CD8-positive, alpha-beta T cell (primary cell): ENCODE measurements at regions of chr1 and their contacts with region 1.

Region 1: GRCh38 chr1:160006312-160006940 is 25.4 kb downstream of the PIGM start:
- DNase-seq: peak; percentile 47 to 83 (median 75)
- ATAC-seq: peak; percentile 95
- H3K4me3 ChIP-seq: no peak overlapping the region
- H3K4me3 Mint-ChIP-seq: no peak overlapping the region
- H3K27ac ChIP-seq: no peak overlapping the region
- H3K27ac Mint-ChIP-seq: no peak overlapping the region
- H3K4me1 ChIP-seq: no peaks in the 10 kb centered on the region
- H3K4me1 Mint-ChIP-seq: no peaks in the 10 kb centered on the region
- H3K27me3 ChIP-seq: no peaks in the 10 kb centered on the region
- H3K27me3 Mint-ChIP-seq: peaks cover 2% of the 10 kb centered on the region
- CTCF ChIP-seq: peak; percentile 90

Region 2: DNA sequence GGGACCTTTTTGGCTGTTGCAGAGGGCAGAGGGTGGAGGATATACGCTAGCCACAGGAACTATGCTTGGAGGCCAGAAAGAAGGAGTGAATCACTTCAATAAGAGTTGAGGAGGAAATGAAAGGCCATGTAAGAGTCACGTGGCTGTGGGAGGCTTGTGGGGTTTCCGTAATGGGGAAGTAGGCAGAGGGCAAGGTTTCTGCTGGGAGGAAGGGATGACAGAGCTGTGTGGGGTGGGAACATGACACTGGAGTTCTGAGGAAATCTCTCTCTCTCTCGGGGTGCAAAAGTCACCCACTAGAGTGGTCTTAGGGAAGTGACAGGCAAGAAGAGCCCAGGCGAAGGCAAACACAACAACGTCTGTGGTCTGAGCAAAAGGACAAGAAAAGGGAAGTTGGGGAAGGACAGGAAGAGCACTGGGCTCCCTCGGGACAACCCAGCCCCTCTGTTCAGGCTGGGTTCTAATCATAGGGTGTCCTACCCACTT is 1720.6 kb before region 1 on chr1:
- CTCF ChIA-PET with region 1: no interaction called
- POLR2A ChIA-PET with region 1: no interaction called
- intact Hi-C with region 1: no loop called
- DNase-seq: peak in 3 of 9 experiments; percentile 7 to 51 (median 11)
- ATAC-seq: no peak
- H3K4me3 ChIP-seq: no peak overlapping the region
- H3K4me3 Mint-ChIP-seq: no peak overlapping the region
- H3K27ac ChIP-seq: no peak overlapping the region
- H3K27ac Mint-ChIP-seq: no peak overlapping the region
- H3K4me1 ChIP-seq: no peaks in the 10 kb centered on the region
- H3K4me1 Mint-ChIP-seq: peaks cover 12% of the 10 kb centered on the region
- H3K27me3 ChIP-seq: peaks cover 2 to 4% of the 10 kb centered on the region in 2 experiments
- H3K27me3 Mint-ChIP-seq: peaks cover 23% of the 10 kb centered on the region
- CTCF ChIP-seq: no peak

Region 3: DNA sequence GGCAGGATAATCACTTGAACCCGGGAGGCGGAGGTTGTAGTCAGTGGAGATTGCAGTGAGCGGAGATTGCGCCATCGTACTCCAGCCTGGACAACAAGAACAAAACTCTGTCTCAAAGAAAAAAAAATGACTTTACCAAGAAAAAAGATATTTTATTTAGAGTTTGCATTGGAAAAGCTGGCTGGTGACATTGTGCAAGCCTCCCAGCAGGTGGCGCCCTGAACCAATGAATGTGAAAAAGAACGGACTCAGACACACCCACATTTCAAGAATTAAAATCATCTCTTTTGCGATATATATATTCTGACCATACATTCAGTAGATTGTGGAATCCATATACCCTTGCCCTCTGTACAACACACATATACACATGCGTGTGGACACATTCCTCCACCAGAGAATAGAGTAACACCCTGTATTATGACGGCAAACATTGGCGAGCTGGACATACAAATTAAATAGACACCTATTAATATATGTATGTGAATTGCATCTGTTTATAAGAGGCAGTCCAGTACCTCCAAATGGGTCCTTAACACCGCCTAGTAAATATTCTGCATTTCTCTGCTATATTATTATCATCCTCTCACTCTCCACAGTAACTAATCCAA is 874.0 kb before region 1 on chr1:
- CTCF ChIA-PET with region 1: interaction called, 19 read pairs
- POLR2A ChIA-PET with region 1: no interaction called
- intact Hi-C with region 1: no loop called
- DNase-seq: peak; percentile 25 to 72 (median 66)
- ATAC-seq: no peak
- H3K4me3 ChIP-seq: no peak overlapping the region
- H3K4me3 Mint-ChIP-seq: no peak overlapping the region
- H3K27ac ChIP-seq: no peak overlapping the region
- H3K27ac Mint-ChIP-seq: no peak overlapping the region
- H3K4me1 ChIP-seq: no peaks in the 10 kb centered on the region
- H3K4me1 Mint-ChIP-seq: no peaks in the 10 kb centered on the region
- H3K27me3 ChIP-seq: peaks cover 0 to 3% of the 10 kb centered on the region in 2 experiments
- H3K27me3 Mint-ChIP-seq: peaks cover 5% of the 10 kb centered on the region
- CTCF ChIP-seq: peak; percentile 89

Region 4: GRCh38 chr1:159780583-159781582 is 225.5 kb before region 1 on chr1 and contains the start of gene DUSP23:
- CTCF ChIA-PET with region 1: interaction called, 5 read pairs
- POLR2A ChIA-PET with region 1: no interaction called
- intact Hi-C with region 1: loop called (anchors 1 to 5 kb)
- DNase-seq: peak; percentile 90 to 98 (median 95)
- ATAC-seq: peak; percentile 96
- H3K4me3 ChIP-seq: peak within 1 kb of the TSS; percentile 59 to 69
- H3K4me3 Mint-ChIP-seq: peak within 1 kb of the TSS; percentile 89
- H3K27ac ChIP-seq: peak within 1 kb of the TSS; percentile 16 to 62
- H3K27ac Mint-ChIP-seq: peak within 1 kb of the TSS; percentile 89
- H3K4me1 ChIP-seq: peaks cover 10% of the 10 kb centered on the region
- H3K4me1 Mint-ChIP-seq: peaks cover 28% of the 10 kb centered on the region
- H3K27me3 ChIP-seq: no peaks in the 10 kb centered on the region
- H3K27me3 Mint-ChIP-seq: no peaks in the 10 kb centered on the region
- CTCF ChIP-seq: peak; percentile 78
- total RNA-seq, gene DUSP23: 3.8 to 6.3 TPM

Region 5: DNA sequence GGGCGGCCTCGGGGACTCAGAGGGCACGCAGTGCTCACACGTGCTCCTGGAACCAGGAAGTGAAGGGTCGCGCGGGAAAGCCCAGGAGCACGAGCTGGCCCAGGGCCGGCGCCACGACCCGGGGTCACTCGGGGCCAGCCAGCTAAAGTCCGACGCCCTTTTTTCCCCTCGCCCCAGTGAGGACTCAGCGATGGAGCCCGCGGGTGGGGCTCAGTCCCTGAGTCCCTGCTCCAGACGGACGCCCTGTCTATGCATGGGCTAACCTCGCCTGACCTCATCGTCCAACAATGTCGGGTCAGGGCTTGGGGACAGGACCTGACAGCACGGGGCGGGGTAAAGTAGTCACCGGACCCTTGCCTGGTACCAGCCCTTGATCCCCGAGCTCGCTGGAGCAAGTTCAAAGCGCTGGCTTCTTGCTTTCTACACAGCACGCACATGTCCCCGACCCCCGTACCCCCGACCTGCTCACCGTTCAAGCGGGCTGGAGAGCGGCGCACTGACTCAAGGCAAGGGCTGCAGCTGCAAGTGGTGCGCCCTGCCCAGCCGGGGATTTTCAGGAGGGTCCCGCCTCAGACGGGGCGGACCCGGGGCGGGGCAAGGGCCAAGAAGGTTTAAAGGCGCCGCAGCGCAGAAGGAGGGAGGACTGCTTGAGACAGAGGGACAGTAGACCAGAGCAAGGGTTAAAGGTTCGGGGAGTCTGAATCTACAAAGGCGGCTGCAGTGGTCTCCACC is 81.3 kb before region 1 on chr1 and contains the start of gene TAGLN2:
- CTCF ChIA-PET with region 1: interaction called, 24 read pairs
- POLR2A ChIA-PET with region 1: no interaction called
- intact Hi-C with region 1: no loop called
- DNase-seq: peak; percentile 82 to 94 (median 91)
- ATAC-seq: peak; percentile 55
- H3K4me3 ChIP-seq: peak within 1 kb of the TSS; percentile 83 to 96
- H3K4me3 Mint-ChIP-seq: peak within 1 kb of the TSS; percentile 95
- H3K27ac ChIP-seq: peak within 1 kb of the TSS; percentile 94 to 98
- H3K27ac Mint-ChIP-seq: peak within 1 kb of the TSS; percentile 98
- H3K4me1 ChIP-seq: peaks cover 40% of the 10 kb centered on the region
- H3K4me1 Mint-ChIP-seq: peaks cover 53% of the 10 kb centered on the region
- H3K27me3 ChIP-seq: no peaks in the 10 kb centered on the region
- H3K27me3 Mint-ChIP-seq: no peaks in the 10 kb centered on the region
- CTCF ChIP-seq: no peak
- total RNA-seq, gene TAGLN2: 235 to 238 TPM

Region 6: DNA sequence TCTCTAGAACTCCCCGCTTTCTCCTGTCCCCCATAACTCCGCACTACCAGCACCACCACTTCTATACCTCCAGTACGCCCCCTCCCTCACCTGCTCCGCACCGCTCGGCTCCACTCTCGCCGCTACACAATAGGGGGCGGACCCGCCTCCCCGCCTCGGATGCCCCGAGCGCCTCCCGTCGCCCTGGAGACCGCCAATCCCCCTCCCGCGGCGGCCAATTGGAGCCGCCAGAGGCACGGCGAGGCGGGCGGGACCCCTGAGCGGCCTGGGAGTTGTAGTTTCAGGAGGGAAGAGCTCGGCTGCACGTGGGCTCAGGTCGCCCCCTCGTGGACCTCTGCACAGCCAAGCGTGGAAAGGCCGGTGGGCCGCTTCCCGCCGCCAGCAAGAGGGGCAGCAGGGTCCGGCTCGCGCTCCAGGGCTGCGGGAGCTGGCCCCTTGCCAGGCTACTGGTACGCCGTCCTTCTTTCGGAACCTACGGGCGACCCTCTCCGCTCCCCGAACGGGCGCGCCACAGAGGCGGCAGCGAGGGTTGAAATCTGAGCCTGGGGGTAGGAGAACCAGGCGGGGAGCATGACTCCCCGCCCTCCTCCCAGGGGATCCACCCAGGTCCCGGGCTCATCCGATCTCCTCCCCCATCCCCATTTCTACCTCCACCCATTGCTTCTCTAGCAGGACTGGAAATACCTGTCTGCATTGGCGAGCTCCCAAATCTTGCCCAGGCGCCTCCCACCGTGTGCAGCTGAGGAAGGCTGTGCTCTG is 60.8 kb before region 1 on chr1 and contains the start of gene IGSF9:
- CTCF ChIA-PET with region 1: interaction called, 40 read pairs
- POLR2A ChIA-PET with region 1: no interaction called
- intact Hi-C with region 1: no loop called
- DNase-seq: peak; percentile 67 to 92 (median 86)
- ATAC-seq: peak; percentile 97
- H3K4me3 ChIP-seq: peak within 1 kb of the TSS; percentile 13 to 32
- H3K4me3 Mint-ChIP-seq: peak within 1 kb of the TSS; percentile 68
- H3K27ac ChIP-seq: no peak within 1 kb of the TSS
- H3K27ac Mint-ChIP-seq: no peak within 1 kb of the TSS
- H3K4me1 ChIP-seq: peaks cover 12% of the 10 kb centered on the region
- H3K4me1 Mint-ChIP-seq: peaks cover 13% of the 10 kb centered on the region
- H3K27me3 ChIP-seq: peaks cover 5 to 16% of the 10 kb centered on the region in 2 experiments
- H3K27me3 Mint-ChIP-seq: peaks cover 26% of the 10 kb centered on the region
- CTCF ChIP-seq: peak; percentile 67
- total RNA-seq, gene IGSF9: not detected

Region 7: DNA sequence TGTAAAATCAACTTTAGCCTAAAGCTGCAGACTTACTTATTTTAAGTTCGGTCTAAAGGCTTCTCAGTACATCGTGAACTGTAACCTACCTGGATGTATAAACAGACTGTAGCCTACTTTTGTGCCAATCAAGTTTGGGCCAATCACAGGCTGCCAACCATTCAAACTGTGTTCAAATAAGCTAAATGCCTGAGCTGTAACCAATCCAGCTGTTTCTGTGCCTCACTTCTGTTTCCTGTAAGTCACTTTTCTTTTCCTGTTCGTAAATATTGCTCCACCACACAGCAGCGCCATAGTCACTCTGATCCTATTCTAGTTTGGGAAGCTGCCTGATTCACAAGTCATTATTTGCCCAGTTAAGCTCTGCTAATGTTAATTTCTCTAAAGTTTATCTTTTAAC is 14.9 kb before region 1 on chr1:
- CTCF ChIA-PET with region 1: interaction called, 20 read pairs
- POLR2A ChIA-PET with region 1: no interaction called
- intact Hi-C with region 1: no loop called
- DNase-seq: peak in 2 of 9 experiments; percentile 17 to 19
- ATAC-seq: peak; percentile 52
- H3K4me3 ChIP-seq: no peak overlapping the region
- H3K4me3 Mint-ChIP-seq: no peak overlapping the region
- H3K27ac ChIP-seq: no peak overlapping the region
- H3K27ac Mint-ChIP-seq: no peak overlapping the region
- H3K4me1 ChIP-seq: no peaks in the 10 kb centered on the region
- H3K4me1 Mint-ChIP-seq: peaks cover 6% of the 10 kb centered on the region
- H3K27me3 ChIP-seq: no peaks in the 10 kb centered on the region
- H3K27me3 Mint-ChIP-seq: peaks cover 22% of the 10 kb centered on the region
- CTCF ChIP-seq: no peak

Region 8: GRCh38 chr1:160031365-160032164 is 25.1 kb after region 1 on chr1 and contains the start of gene PIGM:
- CTCF ChIA-PET with region 1: interaction called, 22 read pairs
- POLR2A ChIA-PET with region 1: no interaction called
- intact Hi-C with region 1: no loop called
- DNase-seq: peak; percentile 78 to 96 (median 94)
- ATAC-seq: peak; percentile 98
- H3K4me3 ChIP-seq: peak within 1 kb of the TSS; percentile 68 to 90
- H3K4me3 Mint-ChIP-seq: peak within 1 kb of the TSS; percentile 98
- H3K27ac ChIP-seq: peak within 1 kb of the TSS; percentile 58
- H3K27ac Mint-ChIP-seq: peak within 1 kb of the TSS; percentile 93
- H3K4me1 ChIP-seq: peaks cover 23% of the 10 kb centered on the region
- H3K4me1 Mint-ChIP-seq: peaks cover 40% of the 10 kb centered on the region
- H3K27me3 ChIP-seq: no peaks in the 10 kb centered on the region
- H3K27me3 Mint-ChIP-seq: no peaks in the 10 kb centered on the region
- CTCF ChIP-seq: no peak
- total RNA-seq, gene PIGM: 1.4 to 1.6 TPM

Region 9: DNA sequence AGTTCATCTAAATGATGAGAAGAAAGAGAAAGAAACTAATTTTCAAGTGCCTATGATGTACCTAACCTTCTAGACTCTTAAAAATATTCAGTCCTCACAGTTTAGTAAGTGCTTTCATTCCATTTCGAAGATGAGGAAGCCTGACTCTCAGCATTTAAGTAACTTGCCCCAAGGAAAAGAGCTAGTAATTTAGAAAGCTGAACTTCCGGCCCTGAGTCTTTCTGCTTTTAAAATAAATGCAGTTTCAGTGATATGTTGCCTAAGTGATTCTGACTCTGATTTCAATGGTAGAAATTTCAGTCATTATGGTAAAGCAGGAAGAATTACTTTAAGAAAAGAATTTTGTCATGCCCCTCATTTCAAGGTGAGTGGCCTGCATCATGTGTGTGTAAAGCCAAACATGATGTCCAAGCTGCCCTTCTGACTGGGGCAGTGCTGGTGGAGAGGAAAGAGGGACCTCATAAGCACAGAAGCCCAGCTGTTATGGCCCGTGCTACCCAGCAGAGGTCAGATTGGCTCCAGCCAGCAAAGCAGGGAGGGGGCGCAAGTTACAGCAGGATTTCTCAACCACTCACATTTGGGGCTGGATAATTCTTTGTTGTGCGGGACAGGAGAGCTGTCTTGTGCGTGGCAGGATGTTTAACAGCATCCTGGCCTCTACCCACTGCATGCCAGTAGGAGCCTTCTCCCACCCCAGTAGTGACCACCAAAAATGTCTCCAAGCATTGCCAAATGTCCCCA is 155.7 kb after region 1 on chr1:
- CTCF ChIA-PET with region 1: no interaction called
- POLR2A ChIA-PET with region 1: no interaction called
- intact Hi-C with region 1: no loop called
- DNase-seq: no peak
- ATAC-seq: no peak
- H3K4me3 ChIP-seq: no peak overlapping the region
- H3K4me3 Mint-ChIP-seq: no peak overlapping the region
- H3K27ac ChIP-seq: no peak overlapping the region
- H3K27ac Mint-ChIP-seq: no peak overlapping the region
- H3K4me1 ChIP-seq: no peaks in the 10 kb centered on the region
- H3K4me1 Mint-ChIP-seq: no peaks in the 10 kb centered on the region
- H3K27me3 ChIP-seq: peaks cover 0 to 2% of the 10 kb centered on the region in 2 experiments
- H3K27me3 Mint-ChIP-seq: peaks cover 15% of the 10 kb centered on the region
- CTCF ChIP-seq: no peak

Region 10: GRCh38 chr1:160219062-160219929 is 212.9 kb after region 1 on chr1:
- CTCF ChIA-PET with region 1: no interaction called
- POLR2A ChIA-PET with region 1: no interaction called
- intact Hi-C with region 1: no loop called
- DNase-seq: peak in 1 of 9 experiments; percentile 24
- ATAC-seq: no peak
- H3K4me3 ChIP-seq: no peak overlapping the region
- H3K4me3 Mint-ChIP-seq: no peak overlapping the region
- H3K27ac ChIP-seq: no peak overlapping the region
- H3K27ac Mint-ChIP-seq: no peak overlapping the region
- H3K4me1 ChIP-seq: no peaks in the 10 kb centered on the region
- H3K4me1 Mint-ChIP-seq: no peaks in the 10 kb centered on the region
- H3K27me3 ChIP-seq: no peaks in the 10 kb centered on the region
- H3K27me3 Mint-ChIP-seq: no peaks in the 10 kb centered on the region
- CTCF ChIP-seq: no peak